ENCODE measurements at regions of chrX and their contacts with region 1.

Region 1: DNA sequence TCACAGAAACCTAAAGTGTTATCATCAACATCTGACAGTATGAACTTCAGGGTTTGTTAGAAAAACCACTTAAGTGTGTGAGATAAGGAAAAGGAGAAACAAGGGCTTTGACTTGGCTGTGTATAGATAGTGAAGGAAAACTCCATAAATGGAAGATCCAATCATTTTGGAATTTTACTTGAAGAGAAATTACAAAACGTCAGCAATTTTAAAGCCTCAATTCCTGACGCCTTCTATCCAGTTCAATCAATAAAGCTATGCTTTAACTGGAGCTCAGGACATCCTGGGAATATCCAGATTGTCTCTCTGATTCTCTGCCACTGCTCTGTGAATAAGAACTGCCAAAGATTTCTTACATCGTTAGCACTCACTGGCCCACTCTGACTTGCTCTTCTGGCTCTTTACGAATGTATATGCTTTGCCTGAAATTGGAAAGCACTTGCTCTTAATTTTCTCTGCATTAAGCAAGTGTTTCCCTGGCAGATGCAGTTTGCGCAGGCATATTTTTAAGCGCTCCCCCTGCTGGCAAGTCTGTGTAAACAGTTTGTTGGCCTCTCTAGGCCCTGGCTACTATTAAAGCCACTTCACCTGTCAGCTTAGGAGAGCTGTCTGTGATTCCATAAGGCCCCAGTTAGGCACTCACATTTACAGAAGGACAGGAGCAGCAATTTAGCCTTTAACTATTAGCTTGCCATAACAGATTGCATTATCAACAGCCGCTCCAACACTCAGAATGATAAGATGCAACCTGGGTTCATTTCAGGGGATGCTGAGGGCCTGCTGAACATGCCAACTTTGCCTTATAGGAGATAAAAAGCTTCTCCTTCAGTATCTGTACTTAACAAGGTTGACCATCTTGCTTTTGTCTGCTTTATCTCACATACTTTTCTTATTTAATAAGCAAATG is 251.4 kb upstream of the DDX53 start:
- DNase-seq: peak; percentile 6 to 38
- ATAC-seq: peak; percentile 82 to 89
- H3K4me3 ChIP-seq: no peak overlapping the region
- H3K27ac ChIP-seq: no peak overlapping the region
- H3K4me1 ChIP-seq: no peaks in the 10 kb centered on the region
- CTCF ChIP-seq: peak; percentile 57
- EP300 ChIP-seq: no peak
- POLR2A ChIP-seq: no peak
- RAD21 ChIP-seq: peak; percentile 40 to 51; a peak in 3 of 5 replicates

Region 2: GRCh38 chrX:22758807-22759481 is 10.6 kb after region 1 on chrX:
- CTCF ChIA-PET with region 1: interaction called, 10 read pairs
- POLR2A ChIA-PET with region 1: no interaction called
- DNase-seq: no peak
- ATAC-seq: no peak
- H3K4me3 ChIP-seq: no peak overlapping the region
- H3K27ac ChIP-seq: no peak overlapping the region
- H3K4me1 ChIP-seq: no peaks in the 10 kb centered on the region
- CTCF ChIP-seq: no peak
- EP300 ChIP-seq: no peak
- POLR2A ChIP-seq: no peak
- RAD21 ChIP-seq: no peak

Measured in A549 (cell line).